Activated B cell treated with CpG ODN at 0.5 μM for 24 hours (primary cell): ENCODE measurements at regions of chr2 and their contacts with region 1.

Region 1: DNA sequence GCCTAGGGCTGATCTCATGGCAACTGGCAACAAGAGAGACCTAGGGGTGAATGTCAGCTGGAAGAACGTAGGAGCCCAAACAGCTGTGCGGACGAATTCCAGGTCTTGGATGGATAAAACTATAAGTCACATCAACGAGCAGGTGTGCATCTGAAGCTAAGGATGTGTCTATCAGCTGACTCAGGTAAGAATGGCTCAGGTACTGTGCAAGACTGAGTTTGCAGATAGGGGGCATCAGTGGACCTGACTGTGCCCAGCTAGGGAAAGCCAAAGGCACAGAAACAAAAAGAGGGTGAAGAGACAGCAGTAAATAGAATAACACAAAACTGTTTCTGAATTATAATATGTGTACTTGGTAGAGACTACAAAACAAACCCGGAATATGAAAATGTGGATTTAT is 357.3 kb downstream of the ZEB2 start:
- DNase-seq: no peak
- ATAC-seq: peak; percentile 56
- H3K4me3 Mint-ChIP-seq: no peak overlapping the region
- H3K27ac Mint-ChIP-seq: no peak overlapping the region
- H3K4me1 Mint-ChIP-seq: peaks cover 7% of the 10 kb centered on the region
- H3K27me3 Mint-ChIP-seq: no peaks in the 10 kb centered on the region
- CTCF ChIP-seq: no peak

Region 2: DNA sequence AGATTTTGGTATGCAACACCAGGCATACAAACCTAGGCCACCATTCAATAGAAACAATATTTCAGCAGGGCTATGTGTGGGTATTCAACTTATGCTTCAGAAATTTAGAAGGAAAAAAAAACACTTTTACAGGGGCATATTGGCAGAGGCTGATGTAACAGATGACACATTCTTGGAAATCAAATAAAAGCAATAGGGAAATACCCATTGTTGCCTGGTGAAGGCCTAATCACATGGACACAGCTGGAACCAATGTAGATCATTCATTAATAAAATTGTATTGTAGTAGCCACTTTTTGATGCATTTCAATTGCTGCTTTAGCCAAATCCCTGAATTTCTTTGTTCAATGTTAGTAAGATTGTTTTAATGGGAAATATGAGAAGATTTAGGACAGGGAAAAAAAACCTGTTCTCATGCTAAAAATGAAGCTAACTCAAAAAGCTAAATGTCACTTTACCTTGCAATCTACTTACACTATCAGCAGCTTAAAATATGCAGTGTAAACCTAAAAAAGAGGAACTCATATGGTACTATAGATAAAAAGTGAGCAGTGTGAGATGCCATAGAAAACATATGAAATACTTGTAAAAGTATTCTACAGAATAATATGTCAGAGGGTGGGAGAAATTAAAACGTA is 67.9 kb after region 1 on chr2:
- CTCF ChIA-PET with region 1: no interaction called
- POLR2A ChIA-PET with region 1: no interaction called
- intact Hi-C with region 1: no loop called
- DNase-seq: no peak
- ATAC-seq: no peak
- H3K4me3 Mint-ChIP-seq: no peak overlapping the region
- H3K27ac Mint-ChIP-seq: no peak overlapping the region
- H3K4me1 Mint-ChIP-seq: peaks cover 42% of the 10 kb centered on the region
- H3K27me3 Mint-ChIP-seq: no peaks in the 10 kb centered on the region
- CTCF ChIP-seq: no peak

Region 3: GRCh38 chr2:144320491-144320890 is 157.8 kb after region 1 on chr2:
- CTCF ChIA-PET with region 1: no interaction called
- POLR2A ChIA-PET with region 1: no interaction called
- intact Hi-C with region 1: loop called (anchors 1 kb)
- DNase-seq: no peak
- ATAC-seq: peak; percentile 56
- H3K4me3 Mint-ChIP-seq: no peak overlapping the region
- H3K27ac Mint-ChIP-seq: no peak overlapping the region
- H3K4me1 Mint-ChIP-seq: peaks cover 44% of the 10 kb centered on the region
- H3K27me3 Mint-ChIP-seq: no peaks in the 10 kb centered on the region
- CTCF ChIP-seq: no peak

Region 4: GRCh38 chr2:144382849-144383248 is 220.2 kb after region 1 on chr2:
- CTCF ChIA-PET with region 1: no interaction called
- POLR2A ChIA-PET with region 1: no interaction called
- intact Hi-C with region 1: loop called (anchors 5 kb)
- DNase-seq: no peak
- ATAC-seq: peak; percentile 97
- H3K4me3 Mint-ChIP-seq: peak overlapping the region; percentile 50
- H3K27ac Mint-ChIP-seq: peak overlapping the region; percentile 72
- H3K4me1 Mint-ChIP-seq: peaks cover 44% of the 10 kb centered on the region
- H3K27me3 Mint-ChIP-seq: no peaks in the 10 kb centered on the region
- CTCF ChIP-seq: no peak

Region 5: DNA sequence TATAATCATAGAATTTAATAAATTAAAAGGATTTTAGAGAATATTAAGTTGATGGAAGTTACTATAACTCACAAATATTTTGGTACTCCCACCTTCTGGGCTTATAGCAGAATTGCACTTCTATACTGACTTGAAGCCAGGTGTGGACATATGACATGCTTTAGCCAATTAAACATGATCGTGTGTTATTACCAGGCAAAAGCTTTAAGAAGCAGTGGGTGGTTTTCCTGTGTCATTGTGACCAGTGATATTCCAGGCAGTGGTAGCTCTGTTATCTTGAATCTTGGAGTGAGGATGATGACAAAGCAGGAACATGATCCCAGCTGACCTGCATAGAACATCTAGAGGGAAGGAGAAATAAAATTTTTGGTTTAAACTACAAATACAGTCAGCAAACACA is 728.2 kb after region 1 on chr2:
- CTCF ChIA-PET with region 1: no interaction called
- POLR2A ChIA-PET with region 1: no interaction called
- intact Hi-C with region 1: loop called (anchors 5 kb)
- DNase-seq: no peak
- ATAC-seq: peak; percentile 88
- H3K4me3 Mint-ChIP-seq: no peak overlapping the region
- H3K27ac Mint-ChIP-seq: no peak overlapping the region
- H3K4me1 Mint-ChIP-seq: peaks cover 3% of the 10 kb centered on the region
- H3K27me3 Mint-ChIP-seq: no peaks in the 10 kb centered on the region
- CTCF ChIP-seq: no peak

Region 6: GRCh38 chr2:145484443-145485097 is 1321.9 kb after region 1 on chr2:
- CTCF ChIA-PET with region 1: no interaction called
- POLR2A ChIA-PET with region 1: no interaction called
- intact Hi-C with region 1: loop called (anchors 10 kb)
- DNase-seq: no peak
- ATAC-seq: peak; percentile 31
- H3K4me3 Mint-ChIP-seq: no peak overlapping the region
- H3K27ac Mint-ChIP-seq: no peak overlapping the region
- H3K4me1 Mint-ChIP-seq: peaks cover 7% of the 10 kb centered on the region
- H3K27me3 Mint-ChIP-seq: no peaks in the 10 kb centered on the region
- CTCF ChIP-seq: no peak